ENCODE measurements at regions of chr15 and their contacts with region 1.

Region 1: GRCh38 chr15:90931737-90932659 is at the start of gene HDDC3:
- DNase-seq: peak; percentile 94 to 98
- ATAC-seq: peak; percentile 67 to 77
- H3K4me3 ChIP-seq: peak within 1 kb of the TSS; percentile 69
- H3K27ac ChIP-seq: peak within 1 kb of the TSS; percentile 84 to 93
- H3K4me1 ChIP-seq: peaks cover 35% of the 10 kb centered on the region
- CTCF ChIP-seq: peak; percentile 95
- EP300 ChIP-seq: no peak
- POLR2A ChIP-seq: peak; percentile 73
- RAD21 ChIP-seq: peak; percentile 26 to 39
- polyA plus RNA-seq, gene HDDC3: 29.8 and 31.9 TPM in 2 replicates

Region 2: GRCh38 chr15:90648137-90649070 is 283.6 kb before region 1 on chr15:
- CTCF ChIA-PET with region 1: interaction called, 37 read pairs
- POLR2A ChIA-PET with region 1: no interaction called
- DNase-seq: peak; percentile 77 to 78
- ATAC-seq: peak; percentile 32 to 72; a peak in 3 of 6 replicates
- H3K4me3 ChIP-seq: no peak overlapping the region
- H3K27ac ChIP-seq: no peak overlapping the region
- H3K4me1 ChIP-seq: peaks cover 13% of the 10 kb centered on the region; the same call in 2 of the 3 replicates
- CTCF ChIP-seq: peak; percentile 98
- EP300 ChIP-seq: no peak
- POLR2A ChIP-seq: no peak
- RAD21 ChIP-seq: peak; percentile 96 to 97

Region 3: GRCh38 chr15:90915808-90916440 is 16.1 kb before region 1 on chr15:
- CTCF ChIA-PET with region 1: interaction called, 97 read pairs
- POLR2A ChIA-PET with region 1: no interaction called
- DNase-seq: no peak
- ATAC-seq: no peak
- H3K4me3 ChIP-seq: no peak overlapping the region
- H3K27ac ChIP-seq: no peak overlapping the region
- H3K4me1 ChIP-seq: no peaks in the 10 kb centered on the region
- CTCF ChIP-seq: no peak
- EP300 ChIP-seq: no peak
- POLR2A ChIP-seq: no peak
- RAD21 ChIP-seq: no peak

Region 4: GRCh38 chr15:90970274-90970673 is 38.3 kb after region 1 on chr15:
- CTCF ChIA-PET with region 1: interaction called, 21 read pairs
- POLR2A ChIA-PET with region 1: no interaction called
- DNase-seq: no peak
- ATAC-seq: no peak
- H3K4me3 ChIP-seq: no peak overlapping the region
- H3K27ac ChIP-seq: no peak overlapping the region
- H3K4me1 ChIP-seq: no peaks in the 10 kb centered on the region
- CTCF ChIP-seq: no peak
- EP300 ChIP-seq: no peak
- POLR2A ChIP-seq: no peak
- RAD21 ChIP-seq: no peak

Region 5: GRCh38 chr15:90994417-90995311 is 62.7 kb after region 1 on chr15 and contains the start of gene PRC1:
- CTCF ChIA-PET with region 1: interaction called, 28 read pairs
- POLR2A ChIA-PET with region 1: interaction called, 3 read pairs
- DNase-seq: peak; percentile 99
- ATAC-seq: peak; percentile 95 to 97
- H3K4me3 ChIP-seq: peak within 1 kb of the TSS; percentile 95
- H3K27ac ChIP-seq: peak within 1 kb of the TSS; percentile 94 to 95
- H3K4me1 ChIP-seq: peaks cover 11% of the 10 kb centered on the region
- CTCF ChIP-seq: no peak
- EP300 ChIP-seq: no peak
- POLR2A ChIP-seq: peak; percentile 74
- RAD21 ChIP-seq: no peak
- polyA plus RNA-seq, gene PRC1: 376 and 426 TPM in 2 replicates

Region 6: DNA sequence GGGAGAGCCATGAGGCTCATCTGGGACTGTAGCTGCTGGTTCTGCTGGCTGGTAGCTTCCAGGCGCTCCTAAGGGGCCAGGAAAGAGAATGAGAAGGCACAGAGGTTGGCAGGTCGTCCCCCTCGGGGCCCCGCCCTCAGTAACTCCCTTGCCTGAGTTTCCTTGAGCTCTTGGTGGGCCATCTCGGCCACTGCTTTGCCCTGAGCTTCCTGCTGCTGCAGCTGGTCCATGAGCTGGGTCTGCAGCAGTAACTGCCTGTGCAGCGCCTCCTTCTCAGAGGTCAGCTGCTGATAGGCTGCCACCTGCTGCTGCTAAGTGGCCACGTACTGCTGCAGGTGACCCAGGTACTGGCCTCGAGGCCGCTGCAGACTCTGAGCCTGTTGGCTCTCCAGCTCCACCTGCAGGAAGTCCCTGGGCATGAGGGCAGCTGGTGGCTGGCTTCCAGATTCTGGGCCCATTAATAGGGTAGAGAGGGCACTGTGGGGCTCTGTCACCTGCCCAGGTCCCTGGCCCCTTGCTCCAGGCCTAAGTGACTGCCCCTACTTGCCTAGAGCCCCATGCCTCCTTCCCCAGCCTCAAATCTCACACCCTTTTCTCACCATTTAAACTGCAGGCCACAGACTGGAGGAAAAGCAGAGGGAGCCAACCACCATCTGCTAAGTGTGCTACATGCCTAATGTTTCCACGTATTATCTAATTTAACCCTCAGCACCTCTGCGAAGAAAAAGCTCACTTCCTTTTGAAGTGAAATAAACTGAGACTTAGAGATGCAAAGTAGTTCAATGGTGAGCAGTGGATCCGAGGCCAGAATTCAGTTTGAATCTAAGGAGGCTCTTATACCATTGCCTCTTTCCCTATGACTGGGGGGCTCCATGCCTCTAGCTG is 101.2 kb after region 1 on chr15:
- CTCF ChIA-PET with region 1: interaction called, 35 read pairs
- POLR2A ChIA-PET with region 1: no interaction called
- DNase-seq: peak in 1 of 2 experiments; percentile 73
- ATAC-seq: peak; percentile 76 to 88; a peak in 5 of 6 replicates
- H3K4me3 ChIP-seq: no peak overlapping the region
- H3K27ac ChIP-seq: no peak overlapping the region
- H3K4me1 ChIP-seq: no peaks in the 10 kb centered on the region
- CTCF ChIP-seq: peak; percentile 62
- EP300 ChIP-seq: no peak
- POLR2A ChIP-seq: no peak
- RAD21 ChIP-seq: peak; percentile 52 to 60

Region 7: GRCh38 chr15:91271565-91272153 is 339.7 kb after region 1 on chr15:
- CTCF ChIA-PET with region 1: interaction called, 44 read pairs
- POLR2A ChIA-PET with region 1: no interaction called
- DNase-seq: peak; percentile 51 to 76
- ATAC-seq: peak; percentile 86 to 90; a peak in 5 of 6 replicates
- H3K4me3 ChIP-seq: no peak overlapping the region
- H3K27ac ChIP-seq: no peak overlapping the region
- H3K4me1 ChIP-seq: no peaks in the 10 kb centered on the region
- CTCF ChIP-seq: peak; percentile 97
- EP300 ChIP-seq: no peak
- POLR2A ChIP-seq: no peak
- RAD21 ChIP-seq: peak; percentile 95 to 96

Measured in A549 (cell line).